ENCODE measurements at regions of chr5 and their contacts with region 1.

Region 1: GRCh38 chr5:78359831-78360673 is at the start of gene SCAMP1:
- DNase-seq: peak; percentile 95 to 98 (median 96)
- H3K4me3 ChIP-seq: peak within 1 kb of the TSS; percentile 88 to 96 (median 88)
- H3K27ac ChIP-seq: peak within 1 kb of the TSS; percentile 91 to 93
- H3K4me1 ChIP-seq: peaks cover 0 to 11% (median 4%) of the 10 kb centered on the region in 3 donors
- H3K27me3 ChIP-seq: no peaks in the 10 kb centered on the region
- CTCF ChIP-seq: peak; percentile 8
- total RNA-seq, gene SCAMP1: 42.1 TPM

Region 2: GRCh38 chr5:78317515-78317914 is 42.5 kb before region 1 on chr5:
- intact Hi-C with region 1: loop called (anchors 5 kb)
- DNase-seq: no peak
- H3K4me3 ChIP-seq: no peak overlapping the region
- H3K27ac ChIP-seq: no peak overlapping the region
- H3K4me1 ChIP-seq: no peaks in the 10 kb centered on the region
- H3K27me3 ChIP-seq: no peaks in the 10 kb centered on the region
- CTCF ChIP-seq: no peak